HepG2 (cell line): ENCODE measurements at regions of chr2 and their contacts with region 1.

Region 1: GRCh38 chr2:231056453-231057424 is at the start of gene PSMD1:
- DNase-seq: peak; percentile 91
- ATAC-seq: peak; percentile 71
- H3K4me3 ChIP-seq: peak within 1 kb of the TSS; percentile 83 to 99 (median 96)
- H3K27ac ChIP-seq: peak within 1 kb of the TSS; percentile 95
- H3K4me1 ChIP-seq: peaks cover 57% of the 10 kb centered on the region
- H3K27me3 ChIP-seq: no peaks in the 10 kb centered on the region; a peak in 1 of 5 replicates
- CTCF ChIP-seq: peak; percentile 95
- EP300 ChIP-seq: peak in 1 of 2 experiments; percentile 28; a peak in 1 of 4 replicates
- POLR2A ChIP-seq: peak in 1 of 2 experiments; percentile 86; a peak in 2 of 4 replicates
- RAD21 ChIP-seq: peak; percentile 62
- total RNA-seq, gene PSMD1: 191 and 287 TPM in 2 replicates

Region 2: DNA sequence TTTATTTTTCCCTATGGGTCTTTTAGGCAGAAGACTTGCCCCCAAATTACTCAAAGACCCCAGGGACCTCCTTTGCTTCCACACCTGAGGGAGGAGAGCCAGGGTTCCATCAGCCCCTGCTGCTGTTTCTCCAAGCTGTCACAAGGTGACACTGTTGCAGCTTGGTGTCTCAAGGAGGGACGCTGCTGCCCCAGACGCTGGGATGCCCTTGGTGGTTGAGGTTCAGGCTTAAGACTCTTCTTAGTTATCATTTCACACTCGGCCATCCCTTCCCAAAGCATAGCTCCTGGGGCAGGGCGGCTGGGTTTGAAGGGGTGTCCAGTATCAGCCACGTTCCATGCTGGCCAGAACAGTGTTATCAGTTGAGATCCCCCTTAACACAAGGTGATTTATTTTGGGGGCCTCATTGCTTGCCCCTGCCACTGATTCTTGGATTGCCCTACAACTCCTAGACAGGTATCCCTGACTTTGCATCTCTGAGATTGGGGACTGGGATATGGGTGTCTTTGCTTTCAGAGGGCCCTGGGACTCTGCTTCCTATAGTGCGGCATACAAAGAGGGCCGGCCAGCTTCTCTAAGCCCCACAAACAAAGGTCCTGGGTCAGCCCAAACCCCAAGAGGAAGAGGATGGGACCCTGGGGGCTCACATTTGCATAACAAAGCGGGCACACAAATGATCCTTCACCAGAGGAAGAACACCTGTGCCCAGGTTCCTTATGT is 154.4 kb before region 1 on chr2:
- CTCF ChIA-PET with region 1: interaction called, 3 read pairs
- POLR2A ChIA-PET with region 1: interaction called, 6 read pairs
- in situ Hi-C with region 1: no loop called
- intact Hi-C with region 1: loop called (anchors 1 kb)
- DNase-seq: peak; percentile 56
- ATAC-seq: peak; percentile 64
- H3K4me3 ChIP-seq: no peak overlapping the region
- H3K27ac ChIP-seq: no peak overlapping the region
- H3K4me1 ChIP-seq: peaks cover 12% of the 10 kb centered on the region
- H3K27me3 ChIP-seq: peaks cover 6 to 66% of the 10 kb centered on the region in 2 experiments
- CTCF ChIP-seq: peak; percentile 92
- EP300 ChIP-seq: no peak
- POLR2A ChIP-seq: no peak
- RAD21 ChIP-seq: peak; percentile 76

Region 3: DNA sequence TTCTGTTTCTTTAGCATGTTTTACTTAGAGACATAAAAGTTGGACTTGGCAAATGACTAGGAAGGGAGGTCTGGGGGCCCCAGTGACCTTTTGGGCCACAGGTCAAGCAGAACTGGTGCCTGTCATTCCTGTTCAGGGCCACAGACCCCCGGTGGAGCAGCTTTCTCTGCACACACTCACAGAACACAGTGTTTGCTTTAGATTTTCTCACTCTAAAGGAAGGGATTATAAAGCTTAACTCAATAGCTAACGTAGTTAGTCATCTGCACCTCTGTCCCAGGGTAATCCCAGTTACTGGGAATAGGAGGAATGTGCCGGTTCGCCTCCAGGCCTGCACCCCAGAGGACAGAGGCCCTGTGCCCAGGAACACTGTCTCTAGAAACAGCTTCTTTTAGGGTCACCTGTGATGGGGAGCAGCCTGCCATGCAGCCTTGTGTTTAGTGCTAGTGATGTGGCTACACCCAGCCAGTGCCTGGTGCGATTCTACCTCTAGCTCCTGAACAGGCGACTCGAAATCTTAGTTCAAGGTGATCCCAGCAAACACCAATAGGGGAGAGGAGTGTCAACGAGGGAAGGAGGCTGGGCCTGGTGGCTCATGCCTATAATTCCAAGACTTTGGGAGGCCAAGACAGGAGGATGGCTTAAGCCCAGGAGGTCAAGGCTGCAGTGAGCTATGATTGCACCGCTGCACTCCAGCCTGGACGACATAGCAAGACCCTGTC is 49.3 kb before region 1 on chr2:
- CTCF ChIA-PET with region 1: no interaction called
- POLR2A ChIA-PET with region 1: interaction called, 46 read pairs
- in situ Hi-C with region 1: no loop called
- intact Hi-C with region 1: loop called (anchors 2 kb)
- DNase-seq: peak; percentile 76
- ATAC-seq: peak; percentile 89
- H3K4me3 ChIP-seq: peak overlapping the region in 1 of 3 experiments; percentile 15; a peak in 1 of 6 replicates
- H3K27ac ChIP-seq: peak overlapping the region; percentile 7
- H3K4me1 ChIP-seq: peaks cover 36% of the 10 kb centered on the region
- H3K27me3 ChIP-seq: peaks cover 3 to 48% of the 10 kb centered on the region in 2 experiments; a peak in 4 of 5 replicates
- CTCF ChIP-seq: no peak
- EP300 ChIP-seq: peak in 1 of 2 experiments; percentile 70; a peak in 2 of 4 replicates
- POLR2A ChIP-seq: no peak
- RAD21 ChIP-seq: no peak

Region 4: GRCh38 chr2:231037731-231038482 is 18.8 kb before region 1 on chr2:
- CTCF ChIA-PET with region 1: interaction called, 25 read pairs
- POLR2A ChIA-PET with region 1: interaction called, 399 read pairs
- in situ Hi-C with region 1: no loop called
- intact Hi-C with region 1: no loop called
- DNase-seq: no peak
- ATAC-seq: peak; percentile 31
- H3K4me3 ChIP-seq: peak overlapping the region; percentile 83 to 99 (median 99)
- H3K27ac ChIP-seq: peak overlapping the region; percentile 92
- H3K4me1 ChIP-seq: peaks cover 86% of the 10 kb centered on the region
- H3K27me3 ChIP-seq: no peaks in the 10 kb centered on the region; a peak in 1 of 5 replicates
- CTCF ChIP-seq: peak; percentile 41
- EP300 ChIP-seq: no peak
- POLR2A ChIP-seq: no peak
- RAD21 ChIP-seq: peak; percentile 85

Region 5: DNA sequence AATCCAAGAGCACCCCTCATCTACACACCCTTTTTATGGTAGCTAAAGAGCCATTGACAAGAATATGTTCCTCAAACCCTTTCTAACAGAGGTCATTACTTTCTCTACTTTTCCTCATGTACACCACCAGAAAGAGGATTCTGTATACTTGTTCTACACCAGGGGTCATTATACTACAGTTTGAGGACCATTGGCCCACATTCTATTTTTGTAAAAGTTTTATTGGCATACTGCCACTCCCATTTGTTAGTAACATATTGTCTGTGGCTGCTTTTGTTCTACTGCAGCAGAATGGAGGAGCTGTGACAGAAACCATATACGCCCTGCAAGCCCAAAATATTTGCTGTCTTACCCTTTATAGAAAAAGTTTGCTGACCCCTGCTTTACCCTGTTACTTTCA is 53.8 kb after region 1 on chr2:
- CTCF ChIA-PET with region 1: no interaction called
- POLR2A ChIA-PET with region 1: no interaction called
- in situ Hi-C with region 1: no loop called
- intact Hi-C with region 1: no loop called
- DNase-seq: no peak
- ATAC-seq: no peak
- H3K4me3 ChIP-seq: no peak overlapping the region
- H3K27ac ChIP-seq: no peak overlapping the region
- H3K4me1 ChIP-seq: no peaks in the 10 kb centered on the region
- H3K27me3 ChIP-seq: no peaks in the 10 kb centered on the region
- CTCF ChIP-seq: no peak
- EP300 ChIP-seq: no peak
- POLR2A ChIP-seq: no peak
- RAD21 ChIP-seq: no peak